Endothelial cell of umbilical vein (primary cell): ENCODE measurements at regions of chr16 and their contacts with region 1.

Region 1: GRCh38 chr16:50152807-50153452 is at the start of gene TENT4B:
- DNase-seq: peak; percentile 87
- H3K4me3 ChIP-seq: peak within 1 kb of the TSS; percentile 83 to 93 (median 83)
- H3K27ac ChIP-seq: peak within 1 kb of the TSS; percentile 89
- H3K4me1 ChIP-seq: peaks cover 17% of the 10 kb centered on the region
- H3K27me3 ChIP-seq: no peaks in the 10 kb centered on the region
- CTCF ChIP-seq: no peak
- POLR2A ChIP-seq: peak; percentile 79
- total RNA-seq, gene TENT4B: 13.1 TPM in 2 replicates

Region 2: GRCh38 chr16:50065624-50066481 is 87.1 kb before region 1 on chr16 and contains the start of gene HEATR3:
- CTCF ChIA-PET with region 1: interaction called, 8 read pairs
- POLR2A ChIA-PET with region 1: no interaction called
- dilution Hi-C with region 1: no loop called
- intact Hi-C with region 1: loop called (anchors 1 kb)
- DNase-seq: peak; percentile 95
- H3K4me3 ChIP-seq: peak within 1 kb of the TSS; percentile 76 to 82 (median 76)
- H3K27ac ChIP-seq: peak within 1 kb of the TSS; percentile 67
- H3K4me1 ChIP-seq: peaks cover 27% of the 10 kb centered on the region
- H3K27me3 ChIP-seq: no peaks in the 10 kb centered on the region
- CTCF ChIP-seq: no peak
- POLR2A ChIP-seq: peak; percentile 39
- total RNA-seq, gene HEATR3: 17.0 and 23.1 TPM in 2 replicates

Region 3: DNA sequence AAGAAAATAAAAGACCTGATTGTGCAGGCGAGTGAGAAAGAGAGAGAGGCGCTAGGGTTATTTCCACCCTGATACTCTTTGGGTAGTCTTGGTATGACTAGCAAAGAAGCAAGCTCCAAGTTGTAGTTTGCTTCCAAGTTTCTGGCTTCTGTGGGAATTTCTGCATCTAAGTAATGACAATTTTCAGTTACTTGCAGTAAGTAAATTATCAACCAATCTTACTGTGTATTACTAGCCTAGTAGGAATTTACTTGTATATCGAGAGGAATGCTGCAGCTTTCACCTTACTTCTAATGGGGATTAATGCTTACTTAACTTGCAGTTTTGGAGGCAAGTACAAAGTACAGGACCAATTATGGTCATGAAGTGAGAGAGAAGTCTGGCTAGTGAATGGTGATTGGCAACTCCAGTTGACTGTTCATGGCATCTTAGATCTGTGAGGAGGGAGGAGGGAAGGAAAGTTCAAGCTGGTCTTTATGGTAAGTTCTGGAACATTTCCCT is 32.1 kb after region 1 on chr16:
- CTCF ChIA-PET with region 1: interaction called, 3 read pairs
- POLR2A ChIA-PET with region 1: interaction called, 6 read pairs
- dilution Hi-C with region 1: no loop called
- intact Hi-C with region 1: loop called (anchors 2 kb)
- DNase-seq: peak; percentile 60
- H3K4me3 ChIP-seq: no peak overlapping the region
- H3K27ac ChIP-seq: no peak overlapping the region
- H3K4me1 ChIP-seq: peaks cover 16% of the 10 kb centered on the region
- H3K27me3 ChIP-seq: no peaks in the 10 kb centered on the region
- CTCF ChIP-seq: no peak
- POLR2A ChIP-seq: no peak

Region 4: DNA sequence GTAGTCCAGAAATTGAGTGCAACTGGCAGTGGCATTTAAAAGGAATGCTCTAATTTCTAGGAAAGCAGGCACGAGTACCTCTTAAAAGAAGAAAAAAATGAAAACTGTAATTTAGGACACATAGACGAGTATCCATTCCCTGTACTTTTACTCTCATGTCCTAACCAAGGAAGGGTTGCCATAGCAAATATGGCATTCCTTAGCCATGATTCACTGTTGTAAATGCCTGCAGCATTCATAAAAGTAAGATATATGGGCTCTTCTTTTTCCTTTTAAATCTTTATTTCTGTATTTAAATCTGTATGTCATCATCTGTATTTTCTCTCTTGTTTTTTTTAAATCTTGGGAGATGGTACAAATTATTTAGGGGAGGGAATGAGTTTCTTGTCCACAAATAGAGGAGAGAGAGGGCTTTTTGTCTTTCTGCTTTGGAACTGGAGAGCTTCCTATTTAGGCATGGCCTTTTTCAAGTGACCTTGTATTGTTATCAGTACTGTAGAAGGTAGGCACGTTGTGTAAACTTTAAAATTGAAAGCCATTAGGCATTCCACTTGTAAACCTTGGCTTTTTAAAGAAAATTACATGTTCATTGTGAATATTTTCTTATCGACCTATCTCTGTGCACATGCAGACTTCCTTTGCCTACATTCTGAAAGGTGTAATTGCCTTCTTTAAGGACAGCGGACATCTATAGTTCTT is 50.1 kb after region 1 on chr16:
- CTCF ChIA-PET with region 1: interaction called, 55 read pairs
- POLR2A ChIA-PET with region 1: no interaction called
- dilution Hi-C with region 1: no loop called
- intact Hi-C with region 1: loop called (anchors 2 kb)
- DNase-seq: peak; percentile 88
- H3K4me3 ChIP-seq: peak overlapping the region in 1 of 3 experiments; percentile 12
- H3K27ac ChIP-seq: peak overlapping the region; percentile 93
- H3K4me1 ChIP-seq: peaks cover 30% of the 10 kb centered on the region
- H3K27me3 ChIP-seq: no peaks in the 10 kb centered on the region
- CTCF ChIP-seq: no peak
- POLR2A ChIP-seq: no peak

Region 5: DNA sequence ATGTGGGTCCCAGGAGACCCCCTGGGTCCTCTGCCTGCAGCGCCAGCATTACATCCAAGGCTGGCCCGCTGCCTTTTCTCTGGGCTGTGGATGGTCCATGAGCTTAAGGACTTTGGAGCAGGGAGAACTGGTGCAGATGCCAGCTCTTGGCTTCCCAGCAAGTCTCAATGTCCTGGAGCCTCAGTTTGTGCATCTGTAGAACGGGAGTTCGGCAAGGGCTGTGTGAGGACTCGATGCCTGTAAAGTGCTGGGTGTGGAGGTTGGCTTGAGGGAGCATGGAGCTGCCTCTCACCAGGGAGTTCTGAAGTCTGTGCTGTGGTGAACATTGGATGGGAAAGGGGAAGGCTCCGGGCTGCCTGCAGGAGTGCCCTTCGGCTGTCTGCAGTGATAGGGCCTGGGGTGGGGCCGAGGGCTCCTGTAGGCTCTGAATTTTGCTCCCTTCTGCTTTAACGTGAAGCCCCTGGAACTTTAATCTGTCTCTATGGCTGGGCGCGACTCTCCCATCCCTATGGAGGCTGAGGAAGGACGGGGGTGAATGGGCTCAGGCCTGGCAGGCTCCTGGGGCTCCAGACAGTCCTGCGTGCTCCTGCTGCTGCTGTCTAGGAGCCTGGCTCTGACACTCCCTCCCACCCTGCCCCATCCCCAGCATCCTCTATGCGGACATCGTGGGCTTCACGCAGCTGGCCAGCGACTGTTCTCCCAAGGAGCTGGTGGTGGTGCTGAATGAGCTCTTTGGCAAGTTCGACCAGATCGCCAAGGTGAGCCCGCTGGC is 141.2 kb after region 1 on chr16:
- CTCF ChIA-PET with region 1: no interaction called
- POLR2A ChIA-PET with region 1: no interaction called
- dilution Hi-C with region 1: no loop called
- intact Hi-C with region 1: no loop called
- DNase-seq: no peak
- H3K4me3 ChIP-seq: no peak overlapping the region
- H3K27ac ChIP-seq: no peak overlapping the region
- H3K4me1 ChIP-seq: no peaks in the 10 kb centered on the region
- H3K27me3 ChIP-seq: no peaks in the 10 kb centered on the region
- CTCF ChIP-seq: no peak
- POLR2A ChIP-seq: no peak

Region 6: GRCh38 chr16:50368410-50369132 is 215.6 kb after region 1 on chr16 and contains the start of gene BRD7:
- CTCF ChIA-PET with region 1: no interaction called
- POLR2A ChIA-PET with region 1: interaction called, 3 read pairs
- dilution Hi-C with region 1: no loop called
- intact Hi-C with region 1: loop called (anchors 5 kb)
- DNase-seq: peak; percentile 39
- H3K4me3 ChIP-seq: peak within 1 kb of the TSS; percentile 46 to 96 (median 87)
- H3K27ac ChIP-seq: peak within 1 kb of the TSS; percentile 63
- H3K4me1 ChIP-seq: peaks cover 8% of the 10 kb centered on the region
- H3K27me3 ChIP-seq: no peaks in the 10 kb centered on the region
- CTCF ChIP-seq: peak in 1 of 2 donors; percentile 48
- POLR2A ChIP-seq: no peak
- total RNA-seq, gene BRD7: 69.1 and 78.0 TPM in 2 replicates

Region 7: GRCh38 chr16:50741808-50742575 is 589.1 kb after region 1 on chr16 and contains the start of gene CYLD:
- CTCF ChIA-PET with region 1: no interaction called
- POLR2A ChIA-PET with region 1: no interaction called
- dilution Hi-C with region 1: no loop called
- intact Hi-C with region 1: loop called (anchors 10 kb)
- DNase-seq: peak; percentile 100
- H3K4me3 ChIP-seq: peak within 1 kb of the TSS; percentile 63 to 92 (median 79)
- H3K27ac ChIP-seq: peak within 1 kb of the TSS; percentile 62
- H3K4me1 ChIP-seq: peaks cover 11% of the 10 kb centered on the region
- H3K27me3 ChIP-seq: peaks cover 2 to 3% of the 10 kb centered on the region in 2 experiments
- CTCF ChIP-seq: no peak
- POLR2A ChIP-seq: no peak
- total RNA-seq, gene CYLD: 21.5 and 22.2 TPM in 2 replicates